Lower leg skin (tissue), 4 donors: ENCODE measurements at regions of chr7 and their contacts with region 1.

Region 1: GRCh38 chr7:158695726-158696452 is 8.7 kb downstream of the NCAPG2 start:
- DNase-seq: peak in 1 of 2 donors; percentile 71
- H3K4me3 ChIP-seq: no peak overlapping the region
- CTCF ChIP-seq: peak in 1 of 3 donors; percentile 55
- POLR2A ChIP-seq: no peak

Region 2: DNA sequence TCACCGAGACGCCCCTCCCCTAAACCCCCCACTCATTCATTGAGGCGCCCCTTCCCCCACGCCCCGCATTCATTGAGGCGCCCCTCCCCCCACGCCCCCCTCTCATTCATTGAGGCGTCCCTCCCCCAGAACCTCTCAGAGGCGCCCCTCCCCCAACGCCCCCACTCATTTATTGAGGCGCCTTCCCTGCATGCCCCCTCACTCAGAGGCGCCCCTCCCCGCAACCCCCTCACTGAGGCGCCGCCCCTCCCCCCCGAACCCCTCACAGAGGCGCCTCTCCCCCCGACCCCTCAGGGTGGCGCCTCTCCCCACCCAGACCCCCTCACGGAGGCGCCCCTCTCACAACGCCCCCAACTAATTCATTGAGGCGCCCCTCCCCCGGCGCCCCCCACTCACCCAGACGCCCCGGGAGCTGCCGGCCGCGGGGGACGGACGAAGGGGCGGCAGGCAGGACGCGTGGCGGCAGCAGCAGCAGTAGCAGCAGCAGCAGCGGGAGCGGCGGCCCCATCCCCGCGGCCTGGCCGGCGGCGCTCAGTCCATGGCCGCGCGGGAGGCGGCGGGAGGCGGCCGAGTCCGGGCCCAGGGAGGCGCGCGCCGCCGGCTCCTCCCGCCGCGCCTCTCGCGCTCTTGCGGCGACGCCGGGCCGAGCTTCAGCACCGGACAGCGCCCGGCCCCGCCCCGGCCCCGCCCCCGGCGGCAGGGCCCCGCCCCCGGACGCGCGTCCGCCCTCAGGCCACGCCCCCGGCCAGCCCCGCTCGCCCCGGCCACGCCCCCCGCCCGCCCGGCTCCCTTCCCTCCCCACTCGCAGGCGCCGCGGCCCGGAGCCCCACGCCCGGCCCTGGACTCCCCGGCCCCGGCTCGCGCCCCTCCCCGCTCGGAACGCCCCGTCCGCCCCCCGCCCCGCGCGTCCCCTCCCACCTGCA is 108.5 kb before region 1 on chr7 and contains the start of gene PTPRN2:
- intact Hi-C with region 1: no loop called
- DNase-seq: no peak
- H3K4me3 ChIP-seq: no peak within 1 kb of the TSS
- CTCF ChIP-seq: no peak
- POLR2A ChIP-seq: no peak
- total RNA-seq, gene PTPRN2: 0.11 to 1.6 (median 0.92) TPM

Region 3: GRCh38 chr7:158979635-158980351 is 283.9 kb after region 1 on chr7:
- intact Hi-C with region 1: loop called (anchors 10 kb)
- DNase-seq: no peak
- H3K4me3 ChIP-seq: no peak overlapping the region
- CTCF ChIP-seq: no peak
- POLR2A ChIP-seq: no peak